Naive thymus-derived CD4-positive, alpha-beta T cell (primary cell): ENCODE measurements at regions of chr15 and their contacts with region 1.

Region 1: GRCh38 chr15:56821721-56822425 is 88.6 kb upstream of the ZNF280D start:
- DNase-seq: peak in 7 of 9 donors; percentile 12 to 46 (median 32)
- ATAC-seq: peak; percentile 62
- H3K4me3 ChIP-seq: no peak overlapping the region
- H3K4me3 Mint-ChIP-seq: no peak overlapping the region
- H3K27ac ChIP-seq: no peak overlapping the region
- H3K27ac Mint-ChIP-seq: no peak overlapping the region
- H3K4me1 ChIP-seq: no peaks in the 10 kb centered on the region
- H3K4me1 Mint-ChIP-seq: peaks cover 0 to 4% (median 0%) of the 10 kb centered on the region in 7 donors
- H3K27me3 ChIP-seq: no peaks in the 10 kb centered on the region
- H3K27me3 Mint-ChIP-seq: no peaks in the 10 kb centered on the region

Region 2: GRCh38 chr15:56052395-56053045 is 769.4 kb before region 1 on chr15:
- CTCF ChIA-PET with region 1: no interaction called
- POLR2A ChIA-PET with region 1: no interaction called
- intact Hi-C with region 1: no loop called
- DNase-seq: peak in 7 of 9 donors; percentile 14 to 66 (median 55)
- ATAC-seq: peak; percentile 71
- H3K4me3 ChIP-seq: no peak overlapping the region
- H3K4me3 Mint-ChIP-seq: no peak overlapping the region
- H3K27ac ChIP-seq: no peak overlapping the region
- H3K27ac Mint-ChIP-seq: no peak overlapping the region
- H3K4me1 ChIP-seq: no peaks in the 10 kb centered on the region
- H3K4me1 Mint-ChIP-seq: peaks cover 0 to 5% (median 0%) of the 10 kb centered on the region in 7 donors
- H3K27me3 ChIP-seq: no peaks in the 10 kb centered on the region
- H3K27me3 Mint-ChIP-seq: no peaks in the 10 kb centered on the region

Region 3: DNA sequence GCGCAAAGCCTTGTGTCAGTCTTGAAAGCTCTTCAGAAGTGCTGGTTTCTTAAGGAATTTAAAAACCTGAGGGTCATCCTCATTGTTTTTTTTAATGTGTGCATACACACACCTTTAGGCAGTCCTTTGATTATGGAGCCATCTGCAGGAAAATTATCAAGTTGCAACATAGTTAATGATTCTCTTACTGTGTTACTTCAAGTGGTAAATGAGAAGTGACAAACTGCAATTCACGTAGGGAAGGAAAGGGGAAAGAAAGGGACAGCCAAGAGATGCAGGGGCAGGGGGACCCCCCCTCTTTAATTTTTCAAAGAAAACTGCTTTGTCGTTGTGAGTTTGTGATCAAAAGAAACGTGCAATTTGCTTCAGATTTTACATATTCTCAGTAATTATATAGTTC is 392.0 kb after region 1 on chr15:
- CTCF ChIA-PET with region 1: interaction called, 3 read pairs
- POLR2A ChIA-PET with region 1: no interaction called
- intact Hi-C with region 1: loop called (anchors 1 to 10 kb)
- DNase-seq: peak in 5 of 9 donors; percentile 5 to 31 (median 14)
- ATAC-seq: peak; percentile 42
- H3K4me3 ChIP-seq: no peak overlapping the region
- H3K4me3 Mint-ChIP-seq: no peak overlapping the region
- H3K27ac ChIP-seq: no peak overlapping the region
- H3K27ac Mint-ChIP-seq: no peak overlapping the region
- H3K4me1 ChIP-seq: no peaks in the 10 kb centered on the region
- H3K4me1 Mint-ChIP-seq: peaks cover 2 to 59% (median 42%) of the 10 kb centered on the region in 7 donors
- H3K27me3 ChIP-seq: no peaks in the 10 kb centered on the region
- H3K27me3 Mint-ChIP-seq: no peaks in the 10 kb centered on the region